ENCODE measurements at regions of chr6 and their contacts with region 1.

Region 1: DNA sequence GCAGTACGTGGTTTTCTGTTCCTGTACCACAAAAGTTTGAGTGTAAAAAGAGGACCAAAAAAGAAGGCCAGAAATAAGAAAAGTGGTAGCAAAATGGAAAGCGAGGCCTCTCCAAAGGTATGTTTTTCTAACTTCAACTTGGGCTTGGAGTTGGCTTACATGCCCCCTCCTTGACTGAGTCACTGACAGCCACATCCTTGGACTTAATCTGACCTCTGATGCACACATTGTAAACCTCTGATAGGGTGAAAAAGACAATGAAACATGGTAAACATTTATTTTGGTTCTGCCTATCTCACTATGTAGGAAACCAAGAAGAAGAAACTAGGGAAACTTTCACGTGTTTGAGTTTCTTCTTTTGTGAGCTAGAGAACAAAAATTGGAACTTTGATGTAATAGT is 503.2 kb upstream of the ID4 start:
- DNase-seq: no peak
- H3K4me3 ChIP-seq: no peak overlapping the region
- CTCF ChIP-seq: no peak

Region 2: GRCh38 chr6:19301980-19302379 is 32.0 kb before region 1 on chr6:
- in situ Hi-C with region 1: no loop called
- DNase-seq: no peak
- H3K4me3 ChIP-seq: no peak overlapping the region
- CTCF ChIP-seq: no peak

Region 3: GRCh38 chr6:19369785-19370184 is 35.8 kb after region 1 on chr6:
- in situ Hi-C with region 1: loop called (anchors 5 kb)
- DNase-seq: no peak
- H3K4me3 ChIP-seq: no peak overlapping the region
- CTCF ChIP-seq: no peak

Region 4: DNA sequence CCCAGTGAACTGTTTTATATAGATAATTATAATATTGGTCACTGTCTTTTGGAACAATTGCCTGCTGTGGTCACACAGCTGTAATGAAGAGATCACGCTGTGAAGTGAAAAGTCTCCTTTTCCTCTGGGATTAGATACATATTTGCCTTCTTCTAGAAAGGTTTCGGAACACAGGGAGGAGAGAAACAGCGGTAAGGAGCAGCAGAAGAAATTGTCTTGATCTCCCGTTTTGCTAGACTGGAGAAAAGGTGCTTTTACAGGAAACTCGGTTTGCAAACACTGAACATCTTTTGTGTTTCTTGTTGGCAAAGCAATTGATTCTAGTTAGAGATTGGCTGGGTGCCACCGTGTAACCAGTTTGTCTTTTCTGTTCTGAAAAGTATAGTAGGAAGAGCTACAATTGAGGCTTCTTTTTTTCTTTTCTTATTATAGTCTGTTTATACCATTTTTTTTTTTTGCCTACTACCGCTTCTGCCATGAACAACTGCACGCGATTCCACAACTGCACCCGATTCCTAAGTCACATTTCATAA is 99.1 kb after region 1 on chr6:
- in situ Hi-C with region 1: loop called (anchors 25 kb)
- DNase-seq: no peak
- H3K4me3 ChIP-seq: no peak overlapping the region
- CTCF ChIP-seq: no peak